GM10248 (cell line): ENCODE measurements at regions of chr11 and their contacts with region 1.

Region 1: DNA sequence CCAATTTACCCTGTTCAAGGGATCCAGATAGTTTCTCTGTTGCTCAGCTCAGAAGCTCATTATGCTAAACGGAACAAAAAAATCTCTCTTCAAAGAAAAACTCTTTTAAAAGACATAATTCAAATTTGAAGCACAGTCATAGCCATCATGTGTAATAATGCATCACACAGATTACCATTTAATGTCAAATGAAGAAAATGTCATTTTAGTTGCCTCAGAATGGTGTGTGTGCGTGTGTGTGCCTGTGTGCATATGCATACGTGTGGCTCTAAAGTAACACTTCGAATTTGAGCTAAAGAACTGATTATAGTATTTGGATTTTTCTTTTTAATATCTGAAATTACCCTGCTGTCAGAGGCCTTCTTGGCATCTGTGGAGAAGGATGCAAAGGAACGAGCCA is 9.9 kb downstream of the TTC12 start:
- DNase-seq: no peak
- CTCF ChIP-seq: no peak

Region 2: GRCh38 chr11:113222241-113222640 is 102.0 kb before region 1 on chr11:
- CTCF ChIA-PET with region 1: no interaction called
- POLR2A ChIA-PET with region 1: no interaction called
- DNase-seq: no peak
- CTCF ChIP-seq: no peak

Region 3: DNA sequence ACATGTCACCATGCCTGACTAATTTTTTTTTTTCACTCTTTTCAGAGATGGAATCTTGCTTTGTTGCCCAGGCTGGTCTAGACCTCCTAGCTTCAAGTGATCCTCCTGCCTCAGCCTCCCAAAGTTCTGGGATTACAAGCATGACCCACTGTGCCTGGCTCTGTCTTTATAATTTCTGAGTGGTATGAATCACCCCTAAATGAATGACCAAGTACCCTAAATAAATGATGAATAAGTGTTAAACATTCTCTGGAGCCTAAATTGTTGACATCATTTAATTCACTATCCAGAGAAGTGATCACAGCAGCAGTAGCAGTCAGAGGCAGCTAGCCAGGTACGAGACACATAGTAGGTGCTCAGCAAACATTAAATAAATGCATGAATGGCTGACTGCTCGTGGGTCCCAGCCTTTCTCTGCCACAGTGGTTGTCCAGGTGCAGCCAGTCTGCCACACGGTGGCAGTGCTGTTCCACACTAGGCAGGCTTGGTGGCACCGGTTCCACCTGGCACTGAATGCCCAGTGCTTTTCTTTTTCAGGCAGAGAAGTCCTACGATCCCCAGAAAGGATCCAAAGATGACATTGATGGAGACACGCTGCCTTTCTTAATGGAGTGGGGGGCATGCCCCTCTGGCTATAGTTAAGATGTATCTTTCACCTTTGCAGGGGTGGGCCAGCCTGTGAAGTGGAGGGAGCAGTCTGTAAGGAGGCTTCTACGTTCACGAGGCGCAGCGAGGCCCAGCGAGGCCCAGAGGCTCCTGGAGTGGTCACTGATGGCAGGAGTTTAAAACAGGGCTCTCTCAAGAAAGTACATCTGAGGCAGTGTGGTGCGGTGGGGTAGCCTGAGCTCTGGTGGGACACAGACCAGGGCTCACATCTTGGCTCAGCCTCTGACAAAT is 18.6 kb before region 1 on chr11:
- CTCF ChIA-PET with region 1: interaction called, 11 read pairs
- POLR2A ChIA-PET with region 1: no interaction called
- DNase-seq: peak; percentile 61
- CTCF ChIP-seq: peak; percentile 97